ENCODE measurements at regions of chr2 and their contacts with region 1.

Region 1: DNA sequence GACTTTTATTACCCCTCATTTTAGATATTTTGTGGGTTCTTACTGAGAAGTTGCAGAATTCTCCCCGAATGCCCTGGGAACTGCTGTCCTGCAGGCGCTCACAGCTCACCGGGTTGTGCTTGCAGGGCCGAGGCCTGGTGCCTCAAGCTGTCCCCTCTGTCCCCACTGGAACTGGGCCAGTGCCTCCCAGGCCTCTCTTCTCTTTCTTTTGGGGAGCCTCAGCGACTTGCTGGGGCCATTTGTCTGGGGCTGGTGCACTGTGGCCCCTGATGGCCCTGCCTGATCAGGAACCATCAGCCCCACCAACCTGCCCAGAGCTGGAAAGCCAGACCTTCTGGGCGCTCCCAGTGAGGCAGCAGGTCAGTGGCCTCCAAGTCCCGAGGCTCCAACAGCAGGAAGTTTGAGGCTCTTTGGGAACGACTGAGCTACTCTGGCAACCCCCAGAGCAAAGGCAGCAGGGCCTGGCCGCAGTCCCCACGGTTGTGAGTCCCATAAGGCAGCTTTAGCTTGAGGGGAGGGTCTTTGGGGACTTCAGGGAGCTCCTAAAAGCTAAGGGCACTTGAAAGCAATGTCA is 14.7 kb upstream of the NEU4 start:
- DNase-seq: no peak
- H3K4me3 Mint-ChIP-seq: no peak overlapping the region
- H3K27ac Mint-ChIP-seq: no peak overlapping the region
- H3K4me1 Mint-ChIP-seq: peaks cover under 1% of the 10 kb centered on the region
- H3K27me3 Mint-ChIP-seq: peaks cover 2% of the 10 kb centered on the region

Region 2: GRCh38 chr2:240143801-240144648 is 1650.3 kb before region 1 on chr2:
- CTCF ChIA-PET with region 1: no interaction called
- POLR2A ChIA-PET with region 1: no interaction called
- intact Hi-C with region 1: no loop called
- DNase-seq: peak; percentile 84
- H3K4me3 Mint-ChIP-seq: no peak overlapping the region
- H3K27ac Mint-ChIP-seq: no peak overlapping the region
- H3K4me1 Mint-ChIP-seq: no peaks in the 10 kb centered on the region
- H3K27me3 Mint-ChIP-seq: peaks cover 5% of the 10 kb centered on the region

Region 3: GRCh38 chr2:241780939-241781569 is 13.3 kb before region 1 on chr2:
- CTCF ChIA-PET with region 1: interaction called, 3 read pairs
- POLR2A ChIA-PET with region 1: no interaction called
- intact Hi-C with region 1: loop called (anchors 1 kb)
- DNase-seq: no peak
- H3K4me3 Mint-ChIP-seq: no peak overlapping the region
- H3K27ac Mint-ChIP-seq: no peak overlapping the region
- H3K4me1 Mint-ChIP-seq: no peaks in the 10 kb centered on the region
- H3K27me3 Mint-ChIP-seq: no peaks in the 10 kb centered on the region